Activated CD4-positive, alpha-beta memory T cell treated with anti-CD3 and anti-CD28 coated beads for 36 hours (primary cell): ENCODE measurements at regions of chr15 and their contacts with region 1.

Region 1: GRCh38 chr15:94306700-94307650 is 75.6 kb downstream of the MCTP2 start:
- DNase-seq: peak; percentile 39
- H3K4me3 Mint-ChIP-seq: no peak overlapping the region
- H3K27ac Mint-ChIP-seq: peak overlapping the region; percentile 83
- H3K4me1 Mint-ChIP-seq: peaks cover 49% of the 10 kb centered on the region
- H3K27me3 Mint-ChIP-seq: no peaks in the 10 kb centered on the region

Region 2: GRCh38 chr15:94163999-94164807 is 142.8 kb before region 1 on chr15:
- CTCF ChIA-PET with region 1: interaction called, 16 read pairs
- POLR2A ChIA-PET with region 1: no interaction called
- intact Hi-C with region 1: no loop called
- DNase-seq: peak; percentile 68
- H3K4me3 Mint-ChIP-seq: no peak overlapping the region
- H3K27ac Mint-ChIP-seq: no peak overlapping the region
- H3K4me1 Mint-ChIP-seq: no peaks in the 10 kb centered on the region
- H3K27me3 Mint-ChIP-seq: no peaks in the 10 kb centered on the region

Region 3: DNA sequence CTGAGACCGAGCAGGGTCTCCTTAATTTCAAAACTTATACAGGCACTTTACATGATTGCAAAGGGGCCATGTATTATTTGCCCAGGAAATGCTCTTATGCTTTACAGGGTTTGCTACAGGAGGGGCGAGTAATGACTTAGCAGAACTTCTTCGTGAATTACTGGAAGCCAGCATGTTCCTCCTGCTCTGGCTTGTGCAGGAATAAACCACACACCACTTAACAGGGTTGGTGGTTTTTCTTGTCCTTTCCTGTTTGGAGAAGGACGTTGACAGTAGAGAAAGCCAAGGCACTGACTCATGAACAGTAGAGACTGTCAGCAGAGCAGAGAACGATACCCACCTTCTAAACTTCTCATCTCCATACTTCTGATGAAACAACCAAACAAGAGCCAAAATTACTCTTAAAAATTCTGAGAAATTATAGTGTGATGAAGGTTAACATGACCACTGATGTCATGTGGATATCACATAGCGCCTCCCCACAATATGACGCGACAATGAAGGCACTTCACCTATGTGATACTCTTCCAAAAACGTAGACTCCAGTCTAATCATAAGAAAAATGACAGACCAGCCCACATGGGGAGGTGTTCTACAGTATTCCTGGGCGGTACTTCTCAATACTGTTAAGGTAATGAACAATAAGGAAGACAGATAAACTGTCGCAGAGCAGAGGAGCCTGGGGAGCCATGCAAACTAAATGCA is 100.4 kb before region 1 on chr15:
- CTCF ChIA-PET with region 1: interaction called, 3 read pairs
- POLR2A ChIA-PET with region 1: no interaction called
- intact Hi-C with region 1: loop called (anchors 1 kb)
- DNase-seq: peak; percentile 71
- H3K4me3 Mint-ChIP-seq: no peak overlapping the region
- H3K27ac Mint-ChIP-seq: peak overlapping the region; percentile 78
- H3K4me1 Mint-ChIP-seq: peaks cover 18% of the 10 kb centered on the region
- H3K27me3 Mint-ChIP-seq: peaks cover 18% of the 10 kb centered on the region

Region 4: GRCh38 chr15:94287794-94288246 is 19.2 kb before region 1 on chr15:
- CTCF ChIA-PET with region 1: interaction called, 15 read pairs
- POLR2A ChIA-PET with region 1: no interaction called
- intact Hi-C with region 1: loop called (anchors 1 kb)
- DNase-seq: peak; percentile 63
- H3K4me3 Mint-ChIP-seq: no peak overlapping the region
- H3K27ac Mint-ChIP-seq: peak overlapping the region; percentile 64
- H3K4me1 Mint-ChIP-seq: peaks cover 39% of the 10 kb centered on the region
- H3K27me3 Mint-ChIP-seq: no peaks in the 10 kb centered on the region

Region 5: DNA sequence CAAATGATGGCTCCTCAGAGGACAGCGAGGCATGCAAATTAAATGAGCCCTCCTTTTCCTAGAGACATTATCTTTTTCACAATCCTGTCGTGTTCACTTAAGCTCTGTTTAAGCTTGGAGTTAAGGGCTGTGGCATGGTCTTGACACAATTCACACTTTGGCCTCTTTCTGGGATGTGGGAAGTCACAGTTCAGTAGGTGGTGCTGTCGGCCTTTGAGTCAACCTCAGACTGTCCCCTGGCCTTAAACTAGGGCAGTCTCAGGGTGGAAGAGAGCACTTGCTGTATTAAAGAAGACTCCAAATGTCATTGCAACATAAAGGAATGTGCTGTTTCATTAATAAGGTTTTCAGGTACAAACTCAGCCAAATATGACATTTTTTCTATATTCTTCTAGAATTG is 275.4 kb after region 1 on chr15:
- CTCF ChIA-PET with region 1: no interaction called
- POLR2A ChIA-PET with region 1: no interaction called
- intact Hi-C with region 1: loop called (anchors 10 kb)
- DNase-seq: peak; percentile 59
- H3K4me3 Mint-ChIP-seq: no peak overlapping the region
- H3K27ac Mint-ChIP-seq: no peak overlapping the region
- H3K4me1 Mint-ChIP-seq: peaks cover 31% of the 10 kb centered on the region
- H3K27me3 Mint-ChIP-seq: peaks cover 54% of the 10 kb centered on the region